Activated naive CD4-positive, alpha-beta T cell treated with anti-CD3 and anti-CD28 coated beads, Interleukin-2, amount 10 ng/mL, durations not matched to agents 7 days and 5 days (primary cell): ENCODE measurements at regions of chr19 and their contacts with region 1.

Region 1: GRCh38 chr19:10864538-10864899 is 6.8 kb upstream of the CARM1 start:
- DNase-seq: peak; percentile 89
- H3K4me3 Mint-ChIP-seq: no peak overlapping the region
- H3K27ac Mint-ChIP-seq: no peak overlapping the region
- H3K4me1 Mint-ChIP-seq: peaks cover 33% of the 10 kb centered on the region
- H3K27me3 Mint-ChIP-seq: no peaks in the 10 kb centered on the region

Region 2: GRCh38 chr19:10701955-10702525 is 162.5 kb before region 1 on chr19:
- CTCF ChIA-PET with region 1: interaction called, 16 read pairs
- DNase-seq: peak; percentile 44
- H3K4me3 Mint-ChIP-seq: peak overlapping the region; percentile 88
- H3K27ac Mint-ChIP-seq: peak overlapping the region; percentile 79
- H3K4me1 Mint-ChIP-seq: peaks cover 12% of the 10 kb centered on the region
- H3K27me3 Mint-ChIP-seq: peaks cover 8% of the 10 kb centered on the region

Region 3: DNA sequence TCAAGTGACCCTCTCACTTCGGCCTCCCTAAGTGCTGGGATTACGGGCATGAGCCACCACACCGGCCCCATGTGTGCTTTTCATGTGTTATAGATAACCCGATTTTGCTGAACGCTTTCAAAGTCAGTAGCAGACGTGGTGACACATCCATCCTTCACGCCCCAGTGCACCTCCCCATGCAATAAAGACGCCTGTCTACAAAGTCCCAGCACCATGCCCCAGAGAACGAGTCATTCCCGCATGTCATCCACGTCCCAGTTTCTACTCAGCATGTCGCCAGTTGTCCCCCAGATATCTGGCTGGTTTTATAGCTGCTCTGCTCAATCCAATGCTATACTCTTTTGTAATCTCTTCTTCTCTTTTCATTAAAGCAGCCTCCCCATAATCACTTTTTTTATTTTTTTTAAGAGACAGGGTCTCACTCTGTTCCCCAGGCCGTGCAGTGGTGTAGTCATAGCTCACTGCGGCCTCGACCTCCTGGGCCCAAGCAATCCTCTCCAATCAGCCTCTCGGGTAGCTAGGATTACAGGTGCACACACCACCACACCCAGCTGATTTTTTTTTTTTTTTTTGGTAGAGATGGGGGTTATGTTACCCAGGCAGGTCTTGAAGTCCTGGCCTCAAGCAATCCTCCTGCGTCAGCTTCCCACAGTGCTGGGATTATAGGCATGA is 104.1 kb before region 1 on chr19:
- CTCF ChIA-PET with region 1: interaction called, 10 read pairs
- DNase-seq: peak; percentile 48
- H3K4me3 Mint-ChIP-seq: peak overlapping the region; percentile 52
- H3K27ac Mint-ChIP-seq: peak overlapping the region; percentile 89
- H3K4me1 Mint-ChIP-seq: peaks cover 91% of the 10 kb centered on the region
- H3K27me3 Mint-ChIP-seq: no peaks in the 10 kb centered on the region

Region 4: DNA sequence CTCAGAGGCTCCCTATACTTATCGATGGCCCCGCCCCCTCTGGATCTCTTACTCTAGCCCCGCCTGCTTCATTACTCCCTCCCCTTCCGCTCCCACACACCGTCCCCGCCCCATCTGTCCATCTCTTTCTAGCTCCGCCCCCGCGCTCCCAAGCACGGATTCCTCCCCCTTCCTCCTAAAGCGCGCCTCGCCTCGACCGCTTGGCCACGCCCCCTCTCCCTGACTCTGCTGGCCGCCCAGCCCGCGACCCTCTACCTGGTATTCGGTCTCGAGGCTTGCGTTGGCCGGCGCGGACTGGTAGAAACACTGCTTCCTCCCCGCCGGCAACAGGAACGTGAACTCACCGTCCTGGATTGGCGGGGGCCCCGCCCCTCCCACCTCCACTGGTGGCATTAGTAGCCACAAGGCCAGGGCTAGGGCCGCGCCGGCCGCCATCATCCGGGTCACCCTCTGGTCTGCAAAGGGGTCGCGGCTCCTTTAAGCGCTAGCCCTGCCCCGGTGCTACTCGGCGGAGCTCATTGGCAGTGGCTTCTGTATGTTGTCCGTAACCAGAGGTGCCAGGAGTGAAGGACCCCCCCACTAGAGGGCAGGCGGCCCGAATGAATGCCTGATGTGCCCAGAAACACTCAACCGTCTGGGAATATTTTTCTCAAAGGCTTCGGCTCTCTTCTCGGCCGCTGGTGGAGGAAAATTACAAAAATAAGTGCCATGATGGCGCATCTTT is 28.6 kb before region 1 on chr19 and contains the start of gene TMED1:
- CTCF ChIA-PET with region 1: interaction called, 37 read pairs
- DNase-seq: peak; percentile 99
- H3K4me3 Mint-ChIP-seq: peak within 1 kb of the TSS; percentile 91
- H3K27ac Mint-ChIP-seq: peak within 1 kb of the TSS; percentile 98
- H3K4me1 Mint-ChIP-seq: peaks cover 15% of the 10 kb centered on the region
- H3K27me3 Mint-ChIP-seq: peaks cover 4% of the 10 kb centered on the region

Region 5: DNA sequence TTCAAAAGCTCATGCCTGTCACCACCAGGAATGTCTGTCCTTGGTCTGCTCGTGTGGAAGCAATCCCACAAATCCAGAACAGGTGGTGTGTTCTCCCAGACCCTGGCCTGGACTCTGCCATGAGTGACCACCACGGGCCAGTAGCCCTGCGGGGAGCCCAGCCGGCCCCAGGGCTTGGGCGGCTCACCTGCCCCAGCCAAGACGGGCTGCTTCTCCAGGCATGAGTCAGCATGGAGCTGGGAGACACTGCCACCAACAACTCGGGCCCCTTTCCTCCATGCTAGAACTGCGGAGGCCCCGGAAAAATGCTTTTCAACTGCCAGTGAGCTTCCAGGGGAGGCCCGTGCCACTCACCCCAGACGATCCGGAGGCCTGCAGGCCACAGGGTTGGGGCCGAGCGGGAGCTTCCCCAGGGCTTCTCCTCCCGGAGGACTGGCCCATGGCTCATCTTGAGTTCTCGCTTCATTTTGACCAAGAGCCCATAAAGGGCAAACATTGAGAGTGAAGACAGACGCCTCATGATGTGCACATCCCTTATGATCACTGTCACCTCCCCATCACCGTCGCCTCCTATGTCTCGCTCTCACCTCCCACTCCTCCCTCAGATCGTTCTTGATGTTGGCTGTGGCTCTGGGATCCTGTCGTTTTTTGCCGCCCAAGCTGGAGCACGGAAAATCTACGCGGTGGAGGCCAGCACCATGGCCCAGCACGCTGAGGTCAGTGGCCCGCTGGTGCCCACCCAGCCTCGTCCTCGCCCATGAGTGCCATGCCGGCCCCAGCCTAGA is 47.3 kb after region 1 on chr19:
- CTCF ChIA-PET with region 1: no interaction called
- DNase-seq: no peak
- H3K4me3 Mint-ChIP-seq: no peak overlapping the region
- H3K27ac Mint-ChIP-seq: no peak overlapping the region
- H3K4me1 Mint-ChIP-seq: no peaks in the 10 kb centered on the region
- H3K27me3 Mint-ChIP-seq: no peaks in the 10 kb centered on the region

Region 6: DNA sequence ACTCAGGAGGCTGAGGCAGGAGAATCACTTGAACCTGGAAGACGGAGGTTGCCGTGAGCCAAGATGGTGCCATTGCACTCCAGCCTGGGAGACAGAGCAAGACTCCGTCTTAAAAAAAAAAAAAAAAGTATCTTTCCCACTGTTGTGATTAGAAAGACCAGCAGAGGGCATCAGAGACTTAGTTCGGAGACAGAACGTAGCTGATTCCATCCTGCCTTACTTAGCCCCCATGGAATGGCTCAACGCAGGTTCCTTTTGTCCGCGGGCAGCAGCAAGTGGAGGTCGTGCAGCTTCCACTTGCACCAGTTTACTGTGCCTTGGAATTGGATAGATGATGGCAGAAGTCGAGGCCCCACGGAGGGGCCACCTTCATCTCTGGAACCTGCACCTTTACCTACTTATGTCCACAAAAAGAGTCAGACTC is 72.2 kb after region 1 on chr19:
- CTCF ChIA-PET with region 1: no interaction called
- DNase-seq: peak; percentile 49
- H3K4me3 Mint-ChIP-seq: no peak overlapping the region
- H3K27ac Mint-ChIP-seq: no peak overlapping the region
- H3K4me1 Mint-ChIP-seq: peaks cover 16% of the 10 kb centered on the region
- H3K27me3 Mint-ChIP-seq: no peaks in the 10 kb centered on the region